ENCODE measurements at regions of chr3 and their contacts with region 1.

Region 1: DNA sequence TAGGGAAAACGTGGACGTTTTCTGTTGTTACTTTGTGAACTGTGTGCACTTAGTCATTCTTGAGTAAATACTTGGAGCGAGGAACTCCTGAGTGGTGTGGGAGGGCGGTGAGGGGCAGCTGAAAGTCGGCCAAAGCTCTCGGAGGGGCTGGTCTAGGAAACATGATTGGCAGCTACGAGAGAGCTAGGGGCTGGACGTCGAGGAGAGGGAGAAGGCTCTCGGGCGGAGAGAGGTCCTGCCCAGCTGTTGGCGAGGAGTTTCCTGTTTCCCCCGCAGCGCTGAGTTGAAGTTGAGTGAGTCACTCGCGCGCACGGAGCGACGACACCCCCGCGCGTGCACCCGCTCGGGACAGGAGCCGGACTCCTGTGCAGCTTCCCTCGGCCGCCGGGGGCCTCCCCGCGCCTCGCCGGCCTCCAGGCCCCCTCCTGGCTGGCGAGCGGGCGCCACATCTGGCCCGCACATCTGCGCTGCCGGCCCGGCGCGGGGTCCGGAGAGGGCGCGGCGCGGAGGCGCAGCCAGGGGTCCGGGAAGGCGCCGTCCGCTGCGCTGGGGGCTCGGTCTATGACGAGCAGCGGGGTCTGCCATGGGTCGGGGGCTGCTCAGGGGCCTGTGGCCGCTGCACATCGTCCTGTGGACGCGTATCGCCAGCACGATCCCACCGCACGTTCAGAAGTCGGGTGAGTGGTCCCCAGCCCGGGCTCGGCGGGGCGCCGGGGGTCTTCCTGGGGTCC is at the start of gene TGFBR2:
- DNase-seq: peak; percentile 94 to 98 (median 97)
- ATAC-seq: peak; percentile 95 to 98 (median 98)
- H3K4me3 ChIP-seq: peak within 1 kb of the TSS; percentile 67 to 98 (median 94)
- H3K27ac ChIP-seq: peak within 1 kb of the TSS; percentile 94 to 100 (median 99)
- H3K4me1 ChIP-seq: peaks cover 3 to 78% (median 43%) of the 10 kb centered on the region in 12 donors
- H3K27me3 ChIP-seq: no peaks in the 10 kb centered on the region
- CTCF ChIP-seq: peak in 9 of 12 donors; percentile 3 to 45 (median 30)
- POLR2A ChIP-seq: peak in 1 of 2 donors; percentile 94
- total RNA-seq, gene TGFBR2: 82.4 to 217 (median 143) TPM

Region 2: DNA sequence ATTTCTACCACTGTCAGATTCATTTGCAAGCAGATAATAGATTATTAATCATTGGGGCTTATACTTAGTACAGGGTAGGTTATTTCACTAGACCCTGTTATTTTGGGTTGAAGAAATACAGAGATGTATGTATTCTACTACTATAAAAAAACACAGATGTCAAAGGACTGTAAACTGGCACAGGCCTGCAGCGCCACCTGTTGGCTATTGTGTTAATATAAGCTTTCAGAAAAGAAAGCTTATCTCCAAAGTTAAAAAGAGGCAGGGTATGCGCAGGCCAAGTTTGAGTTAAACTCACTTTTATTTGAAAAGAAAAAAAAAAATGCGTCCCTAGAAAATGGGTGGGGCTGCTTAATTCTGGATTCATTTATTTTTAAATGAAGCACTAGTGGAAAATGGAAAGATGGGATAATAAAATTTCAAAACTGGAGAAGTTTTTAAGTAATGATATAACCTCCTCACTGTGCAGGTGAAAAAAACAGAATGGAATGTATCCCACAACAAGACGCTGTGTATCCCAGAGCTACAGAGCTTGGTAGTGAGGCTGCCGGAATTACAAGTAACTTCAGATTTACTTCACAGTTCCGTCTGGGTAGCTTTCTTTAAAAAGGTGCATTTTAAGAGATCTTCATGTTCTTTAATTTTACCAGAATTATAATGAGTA is 407.2 kb before region 1 on chr3:
- intact Hi-C with region 1: loop called in 1 of 10 experiments (anchors 5 kb)
- DNase-seq: peak; percentile 70 to 83 (median 73)
- ATAC-seq: peak in 3 of 4 donors; percentile 52 to 76 (median 67)
- H3K4me3 ChIP-seq: no peak overlapping the region
- H3K27ac ChIP-seq: peak overlapping the region in 2 of 12 donors; percentile 3 to 17
- H3K4me1 ChIP-seq: peaks cover 0 to 25% (median 17%) of the 10 kb centered on the region in 12 donors
- H3K27me3 ChIP-seq: no peaks in the 10 kb centered on the region
- CTCF ChIP-seq: peak; percentile 81 to 95 (median 86)
- POLR2A ChIP-seq: no peak

Region 3: GRCh38 chr3:30347679-30348216 is 258.7 kb before region 1 on chr3:
- intact Hi-C with region 1: loop called in 3 of 10 experiments (anchors 5 to 10 kb)
- DNase-seq: no peak
- ATAC-seq: no peak
- H3K4me3 ChIP-seq: no peak overlapping the region
- H3K27ac ChIP-seq: peak overlapping the region in 2 of 12 donors; percentile 38 to 50
- H3K4me1 ChIP-seq: peaks cover 0 to 64% (median 31%) of the 10 kb centered on the region in 12 donors
- H3K27me3 ChIP-seq: no peaks in the 10 kb centered on the region
- CTCF ChIP-seq: no peak
- POLR2A ChIP-seq: no peak

Region 4: GRCh38 chr3:30437171-30437601 is 169.3 kb before region 1 on chr3:
- intact Hi-C with region 1: loop called in 5 of 10 experiments (anchors 5 to 10 kb)
- DNase-seq: peak in 4 of 5 donors; percentile 33 to 70 (median 52)
- ATAC-seq: peak in 3 of 4 donors; percentile 48 to 76 (median 74)
- H3K4me3 ChIP-seq: no peak overlapping the region
- H3K27ac ChIP-seq: peak overlapping the region; percentile 19 to 83 (median 55)
- H3K4me1 ChIP-seq: peaks cover 0 to 47% (median 27%) of the 10 kb centered on the region in 12 donors
- H3K27me3 ChIP-seq: no peaks in the 10 kb centered on the region
- CTCF ChIP-seq: peak in 3 of 12 donors; percentile 1 to 24 (median 14)
- POLR2A ChIP-seq: no peak

Region 5: DNA sequence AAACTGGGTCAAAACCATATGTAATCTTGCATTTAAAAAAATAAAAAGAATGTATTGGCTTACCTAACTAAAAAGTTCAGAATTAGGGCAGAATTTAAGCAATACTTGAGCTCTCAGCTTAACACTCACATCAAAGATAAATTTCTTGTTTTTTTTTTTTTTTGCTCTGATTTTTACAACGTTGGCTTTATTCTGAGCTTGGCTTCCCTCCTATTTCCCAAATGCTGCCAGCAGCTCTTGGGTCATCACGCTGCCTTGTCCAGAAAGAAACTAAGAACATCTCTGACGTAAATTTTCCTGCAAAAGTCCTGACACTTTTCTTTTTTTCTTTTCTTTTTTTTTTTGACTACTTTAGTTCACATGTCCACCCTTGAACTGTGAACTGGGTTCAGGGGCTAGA is 150.6 kb before region 1 on chr3:
- intact Hi-C with region 1: no loop called
- DNase-seq: peak in 2 of 5 donors; percentile 31 to 43
- ATAC-seq: peak in 3 of 4 donors; percentile 17 to 57 (median 38)
- H3K4me3 ChIP-seq: no peak overlapping the region
- H3K27ac ChIP-seq: peak overlapping the region in 7 of 12 donors; percentile 24 to 74 (median 41)
- H3K4me1 ChIP-seq: peaks cover 0 to 29% (median 6%) of the 10 kb centered on the region in 12 donors
- H3K27me3 ChIP-seq: no peaks in the 10 kb centered on the region
- CTCF ChIP-seq: no peak
- POLR2A ChIP-seq: no peak

Region 6: GRCh38 chr3:30518181-30518864 is 88.1 kb before region 1 on chr3:
- intact Hi-C with region 1: loop called in 4 of 10 experiments (anchors 5 to 10 kb)
- DNase-seq: peak in 4 of 5 donors; percentile 26 to 52 (median 36)
- ATAC-seq: peak; percentile 89 to 94 (median 92)
- H3K4me3 ChIP-seq: no peak overlapping the region
- H3K27ac ChIP-seq: peak overlapping the region; percentile 34 to 84 (median 73)
- H3K4me1 ChIP-seq: peaks cover 0 to 45% (median 29%) of the 10 kb centered on the region in 12 donors
- H3K27me3 ChIP-seq: no peaks in the 10 kb centered on the region
- CTCF ChIP-seq: peak in 7 of 12 donors; percentile 9 to 50 (median 26)
- POLR2A ChIP-seq: no peak

Region 7: DNA sequence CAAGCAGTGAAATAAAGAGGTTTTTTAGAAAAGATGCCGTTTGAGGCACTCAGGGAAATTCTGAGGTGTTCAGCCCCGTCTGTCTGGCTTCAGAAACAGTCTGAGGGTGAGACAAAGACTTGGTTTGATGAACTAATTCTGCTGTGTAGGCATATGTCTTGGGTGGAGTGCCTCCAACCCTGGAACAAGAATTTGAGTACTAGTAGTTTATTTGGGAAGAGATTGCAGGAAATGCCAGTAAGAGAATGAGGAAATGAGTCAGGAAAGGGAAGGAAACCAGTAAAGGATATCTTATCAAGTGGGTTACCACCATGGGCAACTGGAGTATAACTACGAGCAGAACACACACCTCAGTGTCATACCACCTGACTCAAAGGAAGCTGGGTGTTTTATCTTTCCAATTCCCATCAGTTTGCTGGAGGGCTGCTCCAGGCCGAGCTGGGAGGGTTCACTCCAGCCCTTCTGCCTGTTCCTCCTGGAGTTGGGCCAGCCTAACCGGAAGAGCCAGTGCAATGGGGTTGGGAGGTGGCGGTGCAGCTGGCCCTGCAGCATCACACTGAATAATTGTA is 75.3 kb after region 1 on chr3:
- intact Hi-C with region 1: loop called in 4 of 10 experiments (anchors 5 to 10 kb)
- DNase-seq: peak; percentile 59 to 78 (median 69)
- ATAC-seq: peak; percentile 53 to 76 (median 75)
- H3K4me3 ChIP-seq: peak overlapping the region in 2 of 12 donors; percentile 3 to 6
- H3K27ac ChIP-seq: peak overlapping the region; percentile 44 to 81 (median 74)
- H3K4me1 ChIP-seq: peaks cover 10 to 95% (median 81%) of the 10 kb centered on the region in 12 donors
- H3K27me3 ChIP-seq: no peaks in the 10 kb centered on the region
- CTCF ChIP-seq: no peak
- POLR2A ChIP-seq: no peak